Natural killer cell (primary cell): ENCODE measurements at regions of chr16 and their contacts with region 1.

Region 1: GRCh38 chr16:82391690-82392089 is 221.7 kb upstream of the MPHOSPH6 start:
- DNase-seq: no peak
- ATAC-seq: no peak
- H3K4me3 ChIP-seq: no peak overlapping the region
- H3K4me3 Mint-ChIP-seq: no peak overlapping the region
- H3K27ac ChIP-seq: no peak overlapping the region
- H3K27ac Mint-ChIP-seq: no peak overlapping the region
- H3K4me1 ChIP-seq: no peaks in the 10 kb centered on the region
- H3K4me1 Mint-ChIP-seq: no peaks in the 10 kb centered on the region
- H3K27me3 ChIP-seq: no peaks in the 10 kb centered on the region
- H3K27me3 Mint-ChIP-seq: peaks cover 7 to 32% of the 10 kb centered on the region in 2 donors
- CTCF ChIP-seq: no peak

Region 2: DNA sequence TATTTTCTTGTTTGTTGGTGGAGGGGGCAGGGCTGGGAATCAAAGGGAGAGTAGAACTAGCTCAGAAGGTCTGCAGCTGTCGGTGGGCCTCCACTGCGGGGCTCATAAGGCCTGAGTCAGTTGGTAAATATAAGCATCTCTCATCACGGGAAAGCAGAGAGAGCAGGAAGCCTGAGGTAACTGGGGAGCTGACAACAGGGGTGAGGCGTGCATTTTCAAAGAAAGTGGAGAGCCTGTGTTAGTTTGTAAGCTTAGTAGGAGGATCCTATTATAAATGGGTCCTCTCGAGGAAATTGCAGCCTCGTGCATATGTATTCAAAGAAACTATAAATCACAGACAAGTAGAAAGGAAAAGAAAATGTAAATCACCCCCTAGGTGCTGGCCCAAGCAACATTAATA is 14.0 kb after region 1 on chr16:
- intact Hi-C with region 1: loop called (anchors 1 kb)
- DNase-seq: no peak
- ATAC-seq: no peak
- H3K4me3 ChIP-seq: no peak overlapping the region
- H3K4me3 Mint-ChIP-seq: no peak overlapping the region
- H3K27ac ChIP-seq: no peak overlapping the region
- H3K27ac Mint-ChIP-seq: no peak overlapping the region
- H3K4me1 ChIP-seq: no peaks in the 10 kb centered on the region
- H3K4me1 Mint-ChIP-seq: no peaks in the 10 kb centered on the region
- H3K27me3 ChIP-seq: no peaks in the 10 kb centered on the region
- H3K27me3 Mint-ChIP-seq: peaks cover 20 to 25% of the 10 kb centered on the region in 2 donors
- CTCF ChIP-seq: no peak

Region 3: GRCh38 chr16:82509691-82510430 is 118.2 kb after region 1 on chr16:
- intact Hi-C with region 1: no loop called
- DNase-seq: no peak
- ATAC-seq: no peak
- H3K4me3 ChIP-seq: no peak overlapping the region
- H3K4me3 Mint-ChIP-seq: no peak overlapping the region
- H3K27ac ChIP-seq: no peak overlapping the region
- H3K27ac Mint-ChIP-seq: no peak overlapping the region
- H3K4me1 ChIP-seq: no peaks in the 10 kb centered on the region
- H3K4me1 Mint-ChIP-seq: no peaks in the 10 kb centered on the region
- H3K27me3 ChIP-seq: no peaks in the 10 kb centered on the region
- H3K27me3 Mint-ChIP-seq: peaks cover 0 to 8% of the 10 kb centered on the region in 2 donors
- CTCF ChIP-seq: no peak